ENCODE measurements at regions of chr11 and their contacts with region 1.

Region 1: GRCh38 chr11:22625448-22626287 is at the start of gene FANCF:
- DNase-seq: peak; percentile 97
- ATAC-seq: peak; percentile 95
- H3K4me3 ChIP-seq: peak within 1 kb of the TSS; percentile 77 to 93 (median 84)
- H3K27ac ChIP-seq: peak within 1 kb of the TSS; percentile 89
- H3K4me1 ChIP-seq: peaks cover 30% of the 10 kb centered on the region
- H3K27me3 ChIP-seq: no peaks in the 10 kb centered on the region
- CTCF ChIP-seq: no peak
- EP300 ChIP-seq: peak in 1 of 2 experiments; percentile 14; a peak in 1 of 4 replicates
- POLR2A ChIP-seq: peak; percentile 70 to 82; a peak in 2 of 4 replicates
- RAD21 ChIP-seq: peak; percentile 37; the same call in 1 of the 2 replicates
- total RNA-seq, gene FANCF: 9.7 and 12.3 TPM in 2 replicates

Region 2: GRCh38 chr11:22337596-22338485 is 287.8 kb before region 1 on chr11 and contains the start of gene SLC17A6:
- CTCF ChIA-PET with region 1: no interaction called
- POLR2A ChIA-PET with region 1: no interaction called
- in situ Hi-C with region 1: no loop called
- intact Hi-C with region 1: loop called (anchors 10 kb)
- DNase-seq: peak; percentile 21
- ATAC-seq: peak; percentile 56; the same call in 2 of the 3 replicates
- H3K4me3 ChIP-seq: no peak within 1 kb of the TSS
- H3K27ac ChIP-seq: no peak within 1 kb of the TSS
- H3K4me1 ChIP-seq: no peaks in the 10 kb centered on the region
- H3K27me3 ChIP-seq: peaks cover 5 to 29% of the 10 kb centered on the region in 2 experiments; a peak in 3 of 5 replicates
- CTCF ChIP-seq: no peak
- EP300 ChIP-seq: no peak
- POLR2A ChIP-seq: no peak
- RAD21 ChIP-seq: no peak
- total RNA-seq, gene SLC17A6: not detected in 2 replicates

Region 3: GRCh38 chr11:22657101-22657694 is 31.5 kb after region 1 on chr11:
- CTCF ChIA-PET with region 1: no interaction called
- POLR2A ChIA-PET with region 1: no interaction called
- in situ Hi-C with region 1: no loop called
- intact Hi-C with region 1: loop called (anchors 2 kb)
- DNase-seq: no peak
- ATAC-seq: peak; percentile 51; the same call in 2 of the 3 replicates
- H3K4me3 ChIP-seq: no peak overlapping the region
- H3K27ac ChIP-seq: no peak overlapping the region
- H3K4me1 ChIP-seq: peaks cover 12% of the 10 kb centered on the region
- H3K27me3 ChIP-seq: no peaks in the 10 kb centered on the region
- CTCF ChIP-seq: no peak
- EP300 ChIP-seq: no peak
- POLR2A ChIP-seq: no peak
- RAD21 ChIP-seq: no peak

Region 4: GRCh38 chr11:22666688-22667439 is 41.2 kb after region 1 on chr11:
- CTCF ChIA-PET with region 1: no interaction called
- POLR2A ChIA-PET with region 1: interaction called, 14 read pairs
- in situ Hi-C with region 1: no loop called
- intact Hi-C with region 1: loop called (anchors 2 kb)
- DNase-seq: peak; percentile 53
- ATAC-seq: peak; percentile 98
- H3K4me3 ChIP-seq: peak overlapping the region; percentile 74 to 90 (median 86)
- H3K27ac ChIP-seq: peak overlapping the region; percentile 87
- H3K4me1 ChIP-seq: peaks cover 58% of the 10 kb centered on the region
- H3K27me3 ChIP-seq: no peaks in the 10 kb centered on the region; a peak in 1 of 5 replicates
- CTCF ChIP-seq: 0 out of 2 replicates have a peak, but pooled peaks have one; percentile 8
- EP300 ChIP-seq: no peak; a peak in 1 of 4 replicates
- POLR2A ChIP-seq: peak; percentile 62 to 64; a peak in 3 of 4 replicates
- RAD21 ChIP-seq: peak; percentile 59

Region 5: GRCh38 chr11:22703040-22703439 is 77.4 kb after region 1 on chr11:
- CTCF ChIA-PET with region 1: no interaction called
- POLR2A ChIA-PET with region 1: interaction called, 4 read pairs
- in situ Hi-C with region 1: no loop called
- intact Hi-C with region 1: loop called (anchors 2 kb)
- DNase-seq: peak; percentile 88
- ATAC-seq: peak; percentile 83
- H3K4me3 ChIP-seq: no peak overlapping the region
- H3K27ac ChIP-seq: peak overlapping the region; percentile 47
- H3K4me1 ChIP-seq: peaks cover 34% of the 10 kb centered on the region
- H3K27me3 ChIP-seq: no peaks in the 10 kb centered on the region
- CTCF ChIP-seq: no peak
- EP300 ChIP-seq: peak; percentile 23 to 28; a peak in 1 of 4 replicates
- POLR2A ChIP-seq: no peak
- RAD21 ChIP-seq: no peak

Region 6: DNA sequence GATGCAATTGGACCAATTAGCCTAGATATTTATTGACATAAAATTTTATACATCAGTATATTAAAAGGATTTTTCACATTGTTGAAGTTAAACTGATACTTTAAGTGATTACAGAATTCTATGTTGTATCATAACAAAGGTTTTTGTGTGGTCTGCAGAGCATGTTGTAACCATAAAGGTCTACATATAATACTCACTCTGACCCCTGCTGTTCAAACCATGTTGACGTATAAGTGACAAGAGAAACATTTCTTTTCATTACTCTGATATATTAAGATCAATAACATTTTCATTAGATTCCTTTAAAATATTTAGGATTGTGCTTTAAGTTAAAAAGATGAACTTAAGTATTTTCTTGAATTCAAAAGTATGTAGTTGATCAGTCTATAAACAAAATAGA is 104.7 kb after region 1 on chr11:
- CTCF ChIA-PET with region 1: interaction called, 3 read pairs
- POLR2A ChIA-PET with region 1: no interaction called
- in situ Hi-C with region 1: no loop called
- intact Hi-C with region 1: loop called (anchors 2 kb)
- DNase-seq: peak; percentile 59
- ATAC-seq: peak; percentile 56
- H3K4me3 ChIP-seq: no peak overlapping the region
- H3K27ac ChIP-seq: no peak overlapping the region
- H3K4me1 ChIP-seq: peaks cover 10% of the 10 kb centered on the region
- H3K27me3 ChIP-seq: no peaks in the 10 kb centered on the region
- CTCF ChIP-seq: peak; percentile 35
- EP300 ChIP-seq: no peak
- POLR2A ChIP-seq: no peak
- RAD21 ChIP-seq: peak; percentile 48

Region 7: GRCh38 chr11:22829231-22830081 is 203.8 kb after region 1 on chr11 and contains the start of gene SVIP:
- CTCF ChIA-PET with region 1: no interaction called
- POLR2A ChIA-PET with region 1: interaction called, 6 read pairs
- in situ Hi-C with region 1: no loop called
- intact Hi-C with region 1: loop called (anchors 2 kb)
- DNase-seq: peak; percentile 87
- ATAC-seq: peak; percentile 94
- H3K4me3 ChIP-seq: peak within 1 kb of the TSS; percentile 78 to 99 (median 82)
- H3K27ac ChIP-seq: peak within 1 kb of the TSS; percentile 89
- H3K4me1 ChIP-seq: peaks cover 44% of the 10 kb centered on the region
- H3K27me3 ChIP-seq: no peaks in the 10 kb centered on the region; a peak in 1 of 5 replicates
- CTCF ChIP-seq: peak; percentile 91
- EP300 ChIP-seq: peak in 1 of 2 experiments; percentile 38; a peak in 1 of 4 replicates
- POLR2A ChIP-seq: peak; percentile 84
- RAD21 ChIP-seq: no peak
- total RNA-seq, gene SVIP: 27.2 and 31.1 TPM in 2 replicates

Measured in HepG2 (cell line).